ENCODE measurements at regions of chr1 and their contacts with region 1.

Region 1: DNA sequence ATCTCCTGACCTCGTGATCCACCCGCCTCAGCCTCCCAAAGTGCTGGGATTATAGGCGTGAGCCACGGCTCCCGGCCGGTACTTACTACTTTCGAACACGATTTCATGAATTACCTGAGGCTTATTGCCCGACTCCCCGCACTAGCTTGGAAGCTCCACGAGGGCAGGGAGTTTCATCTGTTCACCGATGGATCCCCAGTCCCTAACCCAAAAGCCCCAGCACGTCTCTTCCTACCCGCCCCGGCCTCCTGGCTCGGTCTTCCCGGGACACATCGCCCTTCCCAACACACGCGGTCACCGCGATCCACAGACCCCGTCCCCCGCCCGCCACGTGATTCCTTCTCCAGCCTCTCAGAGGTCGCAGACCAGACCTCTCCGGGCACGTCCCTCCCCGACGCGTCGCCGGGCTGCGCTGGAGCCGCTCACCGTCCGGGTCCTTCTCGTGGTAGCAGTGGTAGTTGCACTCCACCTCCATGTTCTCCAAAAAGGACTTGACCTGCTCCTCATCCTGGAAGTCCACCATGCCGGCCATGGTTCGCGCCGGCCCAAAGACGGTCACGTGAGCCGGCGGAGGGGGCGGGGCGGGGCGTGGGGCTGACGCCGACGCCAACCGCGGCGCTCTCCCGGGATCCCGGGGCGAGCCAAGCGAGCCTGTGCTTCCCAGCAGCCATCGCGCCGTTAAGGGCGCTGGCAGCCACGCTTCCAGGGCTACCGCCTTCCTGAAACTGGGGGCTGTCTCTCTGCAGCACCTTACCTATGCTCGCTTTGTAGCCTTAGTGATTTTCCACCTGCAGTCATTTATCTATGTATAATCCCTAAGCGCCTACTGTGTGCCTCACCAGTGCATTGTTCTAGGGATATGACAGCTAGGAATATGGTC is at the start of gene COA7:
- DNase-seq: peak; percentile 93 to 96 (median 94)
- ATAC-seq: peak; percentile 90
- H3K4me3 ChIP-seq: peak within 1 kb of the TSS; percentile 82
- H3K27ac ChIP-seq: peak within 1 kb of the TSS; percentile 96
- H3K4me1 ChIP-seq: peaks cover 7 to 13% of the 10 kb centered on the region in 2 experiments; a peak in 4 of 5 replicates
- H3K27me3 ChIP-seq: no peaks in the 10 kb centered on the region
- CTCF ChIP-seq: no peak; a peak in 1 of 6 replicates
- EP300 ChIP-seq: no peak
- POLR2A ChIP-seq: peak; percentile 92
- RAD21 ChIP-seq: 0 out of 4 replicates have a peak, but pooled peaks of 1 of the 2 experiments have one; percentile 1
- polyA plus RNA-seq, gene COA7: 59.6 to 82.8 TPM

Region 2: DNA sequence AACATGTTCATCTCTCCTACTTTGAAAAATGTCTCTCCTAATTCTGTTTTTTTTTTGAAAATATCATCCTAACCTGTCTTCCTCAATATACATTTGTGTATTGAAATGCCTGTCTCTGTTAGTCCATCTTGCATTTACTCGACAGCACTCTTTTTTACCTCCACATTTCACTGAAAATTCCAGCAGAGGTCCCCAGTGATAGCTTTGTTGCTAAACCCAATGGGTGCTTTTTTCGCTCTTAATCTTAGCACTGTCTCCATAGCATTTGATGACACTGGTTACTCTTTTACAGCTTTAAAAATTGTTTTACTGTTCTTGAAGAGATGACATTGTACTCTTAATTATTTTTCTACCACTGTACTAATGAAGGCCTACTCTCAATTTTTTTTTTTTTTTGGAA is 1070.4 kb before region 1 on chr1:
- CTCF ChIA-PET with region 1: no interaction called
- POLR2A ChIA-PET with region 1: no interaction called
- in situ Hi-C with region 1: no loop called
- intact Hi-C with region 1: no loop called
- DNase-seq: peak in 2 of 4 experiments; percentile 63 to 80
- ATAC-seq: peak; percentile 71
- H3K4me3 ChIP-seq: no peak overlapping the region
- H3K27ac ChIP-seq: no peak overlapping the region
- H3K4me1 ChIP-seq: peaks cover 21 to 35% of the 10 kb centered on the region in 2 experiments
- H3K27me3 ChIP-seq: no peaks in the 10 kb centered on the region
- CTCF ChIP-seq: peak; percentile 65 to 83 (median 72)
- EP300 ChIP-seq: no peak
- POLR2A ChIP-seq: no peak
- RAD21 ChIP-seq: peak; percentile 70 to 91

Region 3: DNA sequence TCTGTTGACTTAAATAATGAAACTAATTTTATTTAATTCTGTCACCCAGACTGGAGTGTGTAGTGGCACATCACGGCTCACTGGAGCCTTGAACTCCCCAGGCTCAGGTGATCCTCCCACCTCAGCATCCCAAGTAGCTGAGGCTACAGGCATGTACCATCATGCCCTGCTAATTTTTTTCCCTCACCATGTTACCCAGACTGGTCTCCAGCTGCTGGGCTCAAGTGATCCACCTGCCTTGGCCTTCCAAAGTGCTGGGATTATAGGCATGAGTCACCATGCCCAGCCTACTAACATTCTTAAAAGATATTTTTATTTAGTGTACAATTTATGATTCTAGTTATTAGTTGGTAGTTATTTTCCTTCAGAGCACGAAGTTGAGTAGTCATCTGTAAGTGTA is 869.0 kb before region 1 on chr1:
- CTCF ChIA-PET with region 1: no interaction called
- POLR2A ChIA-PET with region 1: no interaction called
- in situ Hi-C with region 1: no loop called
- intact Hi-C with region 1: no loop called
- DNase-seq: no peak
- ATAC-seq: no peak
- H3K4me3 ChIP-seq: no peak overlapping the region
- H3K27ac ChIP-seq: no peak overlapping the region
- H3K4me1 ChIP-seq: no peaks in the 10 kb centered on the region
- H3K27me3 ChIP-seq: no peaks in the 10 kb centered on the region
- CTCF ChIP-seq: no peak
- EP300 ChIP-seq: no peak
- POLR2A ChIP-seq: no peak
- RAD21 ChIP-seq: no peak

Region 4: DNA sequence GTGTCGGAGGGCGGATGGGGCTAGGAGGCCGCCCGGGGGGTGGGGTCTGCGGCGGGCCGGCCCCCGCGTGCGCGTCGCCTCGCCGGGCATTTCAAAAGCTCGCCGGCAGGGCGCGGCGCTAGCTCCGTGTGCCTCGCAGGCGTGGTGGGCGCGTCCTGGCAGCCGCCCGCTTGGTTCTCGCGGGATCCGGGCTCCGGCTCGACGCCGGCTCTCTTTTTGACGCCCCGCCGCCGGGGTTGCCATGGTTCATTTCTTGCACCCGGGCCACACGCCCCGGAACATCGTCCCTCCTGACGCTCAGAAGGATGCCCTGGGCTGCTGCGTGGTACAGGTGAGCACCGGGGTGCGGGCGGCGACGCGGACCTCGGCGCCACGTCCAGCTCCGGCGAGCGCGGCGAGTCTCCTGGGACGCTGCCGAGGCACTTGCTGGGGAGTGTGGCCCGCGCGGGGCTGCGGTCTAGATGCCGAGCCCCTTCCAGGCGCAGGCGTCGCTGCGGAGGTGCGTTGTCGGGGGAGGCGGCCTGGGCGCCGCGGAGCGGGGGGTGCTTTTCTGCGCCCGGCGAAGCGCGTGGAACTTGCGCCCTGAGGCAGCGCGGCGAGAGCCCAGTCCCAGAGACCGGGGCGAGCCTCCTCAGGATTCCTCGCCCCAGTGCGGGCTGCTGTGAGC is 144.7 kb after region 1 on chr1 and contains the start of gene ZYG11A:
- CTCF ChIA-PET with region 1: no interaction called
- POLR2A ChIA-PET with region 1: no interaction called
- in situ Hi-C with region 1: no loop called
- intact Hi-C with region 1: loop called (anchors 5 kb)
- DNase-seq: peak; percentile 95 to 97 (median 96)
- ATAC-seq: peak; percentile 91
- H3K4me3 ChIP-seq: peak within 1 kb of the TSS; percentile 66
- H3K27ac ChIP-seq: peak within 1 kb of the TSS; percentile 94
- H3K4me1 ChIP-seq: peaks cover 4 to 21% of the 10 kb centered on the region in 2 experiments; a peak in 4 of 5 replicates
- H3K27me3 ChIP-seq: no peaks in the 10 kb centered on the region
- CTCF ChIP-seq: peak; percentile 51 to 67 (median 63); a peak in 4 of 6 replicates
- EP300 ChIP-seq: no peak
- POLR2A ChIP-seq: peak; percentile 85
- RAD21 ChIP-seq: peak; percentile 24 to 32; a peak in 3 of 4 replicates
- polyA plus RNA-seq, gene ZYG11A: 4.5 to 4.6 TPM

Region 5: DNA sequence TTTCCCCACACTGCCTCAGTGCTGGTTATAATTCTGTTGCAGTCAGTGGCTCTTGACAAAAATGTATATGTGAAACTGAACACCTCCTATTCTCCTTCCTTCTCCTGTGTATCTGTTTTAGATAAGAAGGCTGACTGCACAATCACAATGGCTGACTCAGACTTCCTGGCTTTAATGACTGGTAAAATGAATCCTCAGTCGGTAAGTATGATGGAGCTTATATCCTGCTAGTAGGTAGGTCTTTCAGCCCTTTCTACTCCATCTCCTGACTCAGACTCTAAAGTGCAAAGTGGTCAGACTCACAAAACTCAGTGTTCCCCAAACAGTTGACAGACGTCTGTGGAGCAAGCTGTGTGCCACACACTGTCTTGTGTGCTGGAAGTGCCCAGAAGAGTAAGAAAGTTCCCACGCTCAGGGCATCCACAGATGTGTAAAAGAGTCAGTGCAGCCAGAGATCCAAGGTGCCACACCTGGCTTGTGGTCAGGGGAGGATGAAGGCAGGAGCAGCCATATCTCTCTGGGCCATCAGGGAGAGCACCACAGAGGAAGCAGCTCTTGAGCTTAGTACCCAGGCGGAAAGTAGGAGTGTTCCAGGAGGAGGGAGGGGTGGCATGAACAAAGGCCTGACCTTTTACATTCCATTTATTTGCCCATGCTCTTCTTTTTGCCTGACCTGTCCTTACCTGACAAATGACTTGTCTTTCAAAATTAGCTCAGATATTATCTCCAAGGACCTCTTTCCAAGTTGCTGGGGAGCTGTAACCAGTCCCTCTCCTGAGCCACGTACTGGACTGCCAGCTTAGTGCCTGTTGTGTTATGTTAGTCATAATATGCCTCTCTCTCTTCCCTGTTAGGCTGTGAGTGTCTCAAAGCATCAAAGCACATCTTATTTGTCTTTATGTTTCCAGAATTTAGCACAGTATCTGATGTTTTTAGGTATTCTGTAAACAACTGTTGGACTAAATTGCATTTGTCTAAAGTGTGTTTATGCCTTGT is 350.0 kb after region 1 on chr1:
- CTCF ChIA-PET with region 1: no interaction called
- POLR2A ChIA-PET with region 1: no interaction called
- in situ Hi-C with region 1: no loop called
- intact Hi-C with region 1: no loop called
- DNase-seq: peak in 2 of 4 experiments; percentile 64 to 74
- ATAC-seq: peak; percentile 84
- H3K4me3 ChIP-seq: no peak overlapping the region
- H3K27ac ChIP-seq: peak overlapping the region; percentile 42; the same call in 2 of the 3 replicates
- H3K4me1 ChIP-seq: peaks cover 10 to 32% of the 10 kb centered on the region in 2 experiments
- H3K27me3 ChIP-seq: no peaks in the 10 kb centered on the region
- CTCF ChIP-seq: no peak
- EP300 ChIP-seq: peak; percentile 38; the same call in 1 of the 2 replicates
- POLR2A ChIP-seq: no peak
- RAD21 ChIP-seq: no peak

Region 6: DNA sequence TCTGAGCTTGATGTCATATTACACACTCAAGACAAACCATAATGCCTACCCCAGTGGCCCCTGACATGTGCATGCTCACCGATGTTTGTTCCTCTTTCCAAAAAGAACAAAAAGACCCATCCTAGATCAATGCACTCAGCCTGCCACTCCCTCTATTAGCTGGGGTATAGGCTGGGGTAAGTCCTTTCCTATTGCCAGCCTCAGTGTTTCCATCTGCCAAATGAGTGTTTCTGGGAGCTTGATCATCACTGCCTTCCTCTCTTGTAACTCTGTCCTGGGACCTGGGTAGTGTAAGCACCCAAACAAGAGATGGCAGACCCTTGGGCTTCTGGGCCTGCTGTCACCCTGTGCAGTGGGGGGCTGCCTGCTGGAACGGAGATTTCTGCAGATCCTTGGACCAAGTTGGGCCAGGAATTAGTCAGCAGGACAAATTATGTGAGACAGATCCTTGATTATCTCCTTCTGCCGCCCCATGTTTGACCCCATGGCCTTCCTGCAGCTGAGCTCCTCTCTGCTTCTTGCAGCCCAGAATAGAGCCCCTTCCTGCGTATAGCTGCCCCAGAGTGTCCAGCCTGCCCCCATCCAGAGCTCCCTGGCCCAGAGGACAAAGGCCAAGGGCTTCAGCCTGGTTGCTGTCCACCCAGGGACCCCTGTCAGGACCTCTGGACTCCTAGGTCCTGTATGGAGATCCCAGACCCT is 661.3 kb after region 1 on chr1:
- CTCF ChIA-PET with region 1: no interaction called
- POLR2A ChIA-PET with region 1: no interaction called
- in situ Hi-C with region 1: no loop called
- intact Hi-C with region 1: no loop called
- DNase-seq: no peak
- ATAC-seq: no peak
- H3K4me3 ChIP-seq: no peak overlapping the region
- H3K27ac ChIP-seq: no peak overlapping the region
- H3K4me1 ChIP-seq: no peaks in the 10 kb centered on the region; a peak in 2 of 5 replicates
- H3K27me3 ChIP-seq: peaks cover 5 to 14% of the 10 kb centered on the region in 2 experiments; a peak in 3 of 5 replicates
- CTCF ChIP-seq: no peak
- EP300 ChIP-seq: no peak
- POLR2A ChIP-seq: no peak
- RAD21 ChIP-seq: no peak

Measured in K562 (cell line).